ENCODE measurements at regions of chr20 and their contacts with region 1.

Region 1: DNA sequence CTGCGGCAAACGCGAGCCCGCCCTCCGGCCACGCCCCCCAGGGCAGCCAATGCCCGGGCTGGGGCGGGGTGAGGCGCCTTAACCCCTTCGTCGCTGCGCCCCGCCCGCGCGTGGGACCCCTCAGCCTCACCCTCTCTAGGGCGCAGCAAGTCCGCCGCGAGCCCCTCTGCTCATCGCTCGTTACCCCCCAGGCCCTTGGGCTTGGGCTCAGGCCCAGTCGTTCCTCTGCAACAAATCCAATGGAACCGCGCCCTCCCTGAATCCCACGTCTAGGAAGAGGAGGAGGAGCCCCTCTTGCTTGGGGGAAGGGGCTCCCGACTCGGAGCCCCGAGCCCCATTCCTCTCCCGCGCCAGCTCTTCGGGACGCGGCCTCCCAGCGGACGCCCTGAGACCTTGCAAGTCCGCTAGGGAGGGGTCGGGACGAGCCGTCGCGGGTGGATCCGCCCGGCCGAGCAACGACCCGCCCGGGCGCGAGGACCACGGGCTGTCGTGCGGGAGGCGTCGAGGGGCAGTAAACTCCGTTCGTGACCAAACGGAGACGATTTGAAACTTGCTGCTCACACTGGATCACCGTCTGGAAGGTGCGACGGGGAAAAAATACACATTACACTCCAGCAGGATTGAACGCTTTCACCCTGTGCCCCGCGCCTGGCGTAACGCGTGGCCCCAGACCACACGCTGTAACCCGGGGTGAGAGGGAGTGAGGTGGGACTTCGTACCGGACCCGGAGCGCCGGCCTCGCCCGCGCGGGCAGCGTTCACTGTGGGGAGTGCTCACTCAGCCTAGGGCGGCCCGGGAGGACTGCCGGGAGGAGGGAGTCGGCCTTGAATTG is 477 bp upstream of the LZTS3 start:
- DNase-seq: peak; percentile 82
- H3K4me3 Mint-ChIP-seq: peak overlapping the region; percentile 82
- H3K27ac Mint-ChIP-seq: no peak overlapping the region
- H3K4me1 Mint-ChIP-seq: peaks cover 8% of the 10 kb centered on the region
- H3K27me3 Mint-ChIP-seq: peaks cover 54% of the 10 kb centered on the region

Region 2: GRCh38 chr20:3121271-3121911 is 52.4 kb before region 1 on chr20:
- intact Hi-C with region 1: no loop called
- DNase-seq: no peak
- H3K4me3 Mint-ChIP-seq: peak overlapping the region; percentile 9
- H3K27ac Mint-ChIP-seq: peak overlapping the region; percentile 52
- H3K4me1 Mint-ChIP-seq: peaks cover 22% of the 10 kb centered on the region
- H3K27me3 Mint-ChIP-seq: no peaks in the 10 kb centered on the region

Region 3: GRCh38 chr20:3209257-3209945 is 35.6 kb after region 1 on chr20 and contains the start of gene ITPA:
- intact Hi-C with region 1: loop called (anchors 2 kb)
- DNase-seq: peak; percentile 50
- H3K4me3 Mint-ChIP-seq: peak within 1 kb of the TSS; percentile 96
- H3K27ac Mint-ChIP-seq: peak within 1 kb of the TSS; percentile 87
- H3K4me1 Mint-ChIP-seq: peaks cover 10% of the 10 kb centered on the region
- H3K27me3 Mint-ChIP-seq: no peaks in the 10 kb centered on the region
- total RNA-seq, gene ITPA: 84.5 and 87.8 TPM in 2 replicates

Region 4: DNA sequence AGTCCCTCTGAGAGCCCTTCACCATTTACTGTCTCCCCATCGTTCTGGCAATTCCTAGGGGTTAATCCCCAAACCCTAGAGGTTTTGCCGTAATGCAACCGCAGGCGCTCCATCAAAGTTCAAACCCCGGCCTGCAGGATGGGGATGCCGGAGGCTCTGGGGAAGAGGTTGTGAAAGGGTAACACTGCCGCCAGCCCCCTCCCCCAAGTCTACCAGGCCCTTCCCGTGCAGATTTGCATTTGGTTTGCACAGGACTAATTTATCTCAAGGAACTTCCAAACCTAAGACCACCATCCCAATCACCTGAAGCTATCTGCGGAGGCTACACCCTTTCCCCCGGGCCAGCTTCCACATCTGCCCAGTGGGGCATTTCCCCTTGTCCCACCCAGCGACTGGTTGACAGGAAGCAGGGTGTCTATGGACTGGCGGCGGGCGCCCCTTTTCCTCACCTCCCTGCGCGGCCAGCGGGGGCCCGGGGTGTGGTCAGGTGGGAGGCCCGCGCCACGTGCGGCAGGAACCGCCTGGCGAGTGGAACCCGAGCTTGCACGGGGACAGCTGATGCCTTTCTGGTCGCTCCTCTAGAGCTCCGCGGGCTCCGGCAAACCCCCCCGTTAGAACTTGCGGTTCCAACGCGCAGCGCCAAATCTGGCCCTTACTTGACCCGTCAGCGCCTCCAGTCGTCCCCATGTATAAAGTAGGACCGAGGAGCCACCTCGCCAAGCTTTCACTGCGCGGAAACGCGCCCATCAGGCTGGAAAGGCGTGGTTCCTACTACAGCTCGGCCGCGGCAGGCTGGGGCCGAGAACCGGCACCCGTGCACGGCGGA is 74.6 kb after region 1 on chr20:
- intact Hi-C with region 1: no loop called
- DNase-seq: no peak
- H3K4me3 Mint-ChIP-seq: no peak overlapping the region
- H3K27ac Mint-ChIP-seq: no peak overlapping the region
- H3K4me1 Mint-ChIP-seq: peaks cover 3% of the 10 kb centered on the region
- H3K27me3 Mint-ChIP-seq: peaks cover 34% of the 10 kb centered on the region

Region 5: DNA sequence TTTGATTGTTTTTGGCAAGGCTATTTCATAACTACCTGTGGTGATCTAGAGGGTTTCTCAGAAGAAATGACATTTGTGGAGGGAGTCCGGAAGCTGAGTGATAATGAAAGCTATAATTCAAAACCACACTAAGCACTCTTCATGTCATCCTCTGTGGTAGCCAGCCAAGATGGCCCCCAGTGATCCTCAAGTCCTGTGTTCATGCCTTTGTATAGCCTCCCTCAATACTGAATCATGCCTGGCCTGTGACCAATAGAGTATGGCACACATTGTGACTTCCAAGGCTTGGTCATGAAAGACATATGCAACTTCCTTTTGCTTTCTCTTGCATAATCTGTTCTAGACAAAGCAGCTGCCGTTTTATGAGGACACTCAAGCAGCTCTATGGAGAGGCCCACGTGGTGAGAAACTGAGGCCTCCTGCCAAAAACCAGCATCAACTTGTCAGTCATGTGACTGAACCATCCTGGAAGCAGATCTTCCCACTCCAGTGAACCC is 246.4 kb after region 1 on chr20:
- intact Hi-C with region 1: no loop called
- DNase-seq: peak; percentile 62
- H3K4me3 Mint-ChIP-seq: no peak overlapping the region
- H3K27ac Mint-ChIP-seq: peak overlapping the region; percentile 71
- H3K4me1 Mint-ChIP-seq: peaks cover 9% of the 10 kb centered on the region
- H3K27me3 Mint-ChIP-seq: peaks cover 11% of the 10 kb centered on the region